Calu3 (cell line): ENCODE measurements at regions of chr12 and their contacts with region 1.

Region 1: GRCh38 chr12:18430425-18431048 is 169.2 kb downstream of the PIK3C2G start:
- DNase-seq: peak; percentile 69
- H3K4me3 Mint-ChIP-seq: no peak overlapping the region
- H3K27ac Mint-ChIP-seq: no peak overlapping the region
- H3K4me1 Mint-ChIP-seq: peaks cover 30% of the 10 kb centered on the region
- H3K27me3 Mint-ChIP-seq: no peaks in the 10 kb centered on the region
- CTCF ChIP-seq: peak; percentile 82

Region 2: DNA sequence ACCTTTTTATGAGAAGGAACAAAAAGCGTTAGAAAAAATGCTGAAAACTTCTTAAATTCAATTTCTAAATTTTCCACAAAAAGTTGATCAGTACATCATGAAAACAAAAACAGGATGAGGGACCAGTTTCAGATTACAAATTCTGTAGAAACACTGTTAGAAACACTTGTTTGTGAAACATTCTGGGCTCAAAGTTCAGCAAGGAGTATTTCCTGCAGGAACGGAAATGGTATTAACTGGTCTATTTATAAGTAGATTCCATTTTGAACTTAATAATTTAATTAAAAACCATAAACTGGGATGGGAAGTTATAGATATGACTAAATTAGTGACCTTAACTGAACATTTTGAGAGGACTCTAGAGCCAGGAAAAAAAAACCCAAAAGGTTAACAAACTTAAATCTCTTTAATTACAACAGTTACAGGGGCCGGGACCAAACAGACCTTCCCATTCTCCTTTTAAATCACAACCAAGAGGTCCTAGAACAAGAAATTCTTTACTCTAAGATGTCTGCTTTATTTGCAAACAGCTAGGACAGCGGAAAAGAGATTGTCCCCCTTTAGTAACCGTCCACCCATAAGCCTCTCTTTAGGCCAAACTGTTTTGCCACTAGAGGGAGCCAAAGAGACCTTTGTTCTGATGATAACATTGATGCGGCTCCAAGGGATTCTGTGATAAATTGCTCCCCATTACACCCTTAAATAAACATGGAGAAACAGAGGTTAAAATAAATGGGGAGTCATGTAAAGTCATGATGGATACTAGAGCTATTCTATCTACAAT is 271.6 kb before region 1 on chr12:
- CTCF ChIA-PET with region 1: no interaction called
- intact Hi-C with region 1: no loop called
- DNase-seq: no peak
- H3K4me3 Mint-ChIP-seq: no peak overlapping the region
- H3K27ac Mint-ChIP-seq: no peak overlapping the region
- H3K4me1 Mint-ChIP-seq: no peaks in the 10 kb centered on the region
- H3K27me3 Mint-ChIP-seq: no peaks in the 10 kb centered on the region
- CTCF ChIP-seq: peak; percentile 59

Region 3: GRCh38 chr12:18270958-18271460 is 159.5 kb before region 1 on chr12:
- CTCF ChIA-PET with region 1: no interaction called
- intact Hi-C with region 1: no loop called
- DNase-seq: no peak
- H3K4me3 Mint-ChIP-seq: peak overlapping the region; percentile 45
- H3K27ac Mint-ChIP-seq: peak overlapping the region; percentile 5
- H3K4me1 Mint-ChIP-seq: peaks cover 53% of the 10 kb centered on the region
- H3K27me3 Mint-ChIP-seq: no peaks in the 10 kb centered on the region
- CTCF ChIP-seq: no peak

Region 4: GRCh38 chr12:18368594-18368993 is 61.9 kb before region 1 on chr12:
- CTCF ChIA-PET with region 1: no interaction called
- intact Hi-C with region 1: no loop called
- DNase-seq: no peak
- H3K4me3 Mint-ChIP-seq: no peak overlapping the region
- H3K27ac Mint-ChIP-seq: no peak overlapping the region
- H3K4me1 Mint-ChIP-seq: no peaks in the 10 kb centered on the region
- H3K27me3 Mint-ChIP-seq: no peaks in the 10 kb centered on the region
- CTCF ChIP-seq: no peak

Region 5: GRCh38 chr12:18629916-18630315 is 199.4 kb after region 1 on chr12:
- CTCF ChIA-PET with region 1: interaction called, 3 read pairs
- intact Hi-C with region 1: loop called (anchors 10 kb)
- DNase-seq: peak; percentile 14
- H3K4me3 Mint-ChIP-seq: no peak overlapping the region
- H3K27ac Mint-ChIP-seq: peak overlapping the region; percentile 29
- H3K4me1 Mint-ChIP-seq: peaks cover 45% of the 10 kb centered on the region
- H3K27me3 Mint-ChIP-seq: no peaks in the 10 kb centered on the region
- CTCF ChIP-seq: no peak

Region 6: DNA sequence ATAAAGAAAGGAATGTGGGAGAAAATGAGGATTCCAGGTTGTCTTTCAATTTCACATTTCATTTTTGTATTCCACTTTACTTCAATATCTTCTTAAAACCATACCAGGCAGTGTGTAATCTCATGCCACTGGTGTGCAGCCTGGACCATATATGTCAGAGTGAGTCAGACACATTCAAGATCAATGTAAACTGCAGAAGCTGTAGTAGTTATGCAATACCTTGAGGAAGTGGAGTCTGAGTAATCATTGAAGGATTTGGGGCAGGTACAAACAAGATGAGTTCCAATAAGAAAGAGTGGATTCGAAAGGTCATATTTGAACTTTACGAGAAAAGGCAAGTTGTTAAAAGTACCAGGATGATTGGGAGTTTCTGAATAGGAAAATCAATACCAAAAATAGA is 293.2 kb after region 1 on chr12:
- CTCF ChIA-PET with region 1: no interaction called
- intact Hi-C with region 1: loop called (anchors 10 kb)
- DNase-seq: peak; percentile 31
- H3K4me3 Mint-ChIP-seq: peak overlapping the region; percentile 42
- H3K27ac Mint-ChIP-seq: peak overlapping the region; percentile 67
- H3K4me1 Mint-ChIP-seq: peaks cover 48% of the 10 kb centered on the region
- H3K27me3 Mint-ChIP-seq: no peaks in the 10 kb centered on the region
- CTCF ChIP-seq: no peak